Natural killer cell (primary cell): ENCODE measurements at regions of chr7 and their contacts with region 1.

Region 1: DNA sequence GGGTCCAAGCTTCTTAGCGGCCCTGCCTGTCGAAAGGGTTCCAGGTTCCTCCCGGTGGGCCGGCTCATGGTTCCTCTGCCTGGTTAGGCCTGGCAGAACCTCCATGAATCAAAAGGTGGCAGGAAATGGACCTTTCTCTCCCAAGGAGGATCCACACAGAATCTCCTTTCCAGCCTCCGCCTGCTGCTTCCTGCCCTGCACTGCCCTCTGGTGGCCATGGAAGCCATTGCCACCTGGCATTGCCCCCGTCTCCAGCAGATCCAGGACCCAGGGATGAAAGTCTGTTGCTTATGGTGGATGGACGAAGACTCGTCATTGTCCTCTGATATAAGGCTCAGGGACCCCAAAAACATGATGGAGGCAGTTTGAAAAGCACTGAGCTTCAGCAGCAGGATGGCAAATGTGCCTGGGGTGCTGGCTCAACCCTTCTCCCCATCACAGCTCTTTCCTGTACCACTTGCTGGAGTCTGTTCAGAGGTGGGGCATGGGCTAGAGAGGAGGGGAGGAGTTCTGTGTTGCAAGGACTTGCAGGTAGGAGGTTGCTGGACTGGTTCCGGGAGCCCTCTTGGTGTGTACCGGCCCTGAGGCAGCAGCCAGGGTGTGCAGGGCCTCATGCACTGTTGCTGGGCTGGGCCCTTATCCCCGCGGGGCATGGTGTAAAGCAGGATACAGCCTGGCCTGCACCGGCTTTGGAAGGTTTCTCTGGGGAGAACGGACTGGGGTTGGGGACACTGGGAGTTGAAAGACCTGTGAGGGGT is 11.3 kb upstream of the INMT start:
- DNase-seq: peak; percentile 76 to 87
- ATAC-seq: peak; percentile 52 to 77 (median 77)
- H3K4me3 ChIP-seq: no peak overlapping the region
- H3K4me3 Mint-ChIP-seq: no peak overlapping the region
- H3K27ac ChIP-seq: no peak overlapping the region
- H3K27ac Mint-ChIP-seq: no peak overlapping the region
- H3K4me1 ChIP-seq: peaks cover 37% of the 10 kb centered on the region
- H3K4me1 Mint-ChIP-seq: peaks cover 40 to 44% of the 10 kb centered on the region in 2 donors
- H3K27me3 ChIP-seq: no peaks in the 10 kb centered on the region
- H3K27me3 Mint-ChIP-seq: no peaks in the 10 kb centered on the region
- CTCF ChIP-seq: peak; percentile 99

Region 2: DNA sequence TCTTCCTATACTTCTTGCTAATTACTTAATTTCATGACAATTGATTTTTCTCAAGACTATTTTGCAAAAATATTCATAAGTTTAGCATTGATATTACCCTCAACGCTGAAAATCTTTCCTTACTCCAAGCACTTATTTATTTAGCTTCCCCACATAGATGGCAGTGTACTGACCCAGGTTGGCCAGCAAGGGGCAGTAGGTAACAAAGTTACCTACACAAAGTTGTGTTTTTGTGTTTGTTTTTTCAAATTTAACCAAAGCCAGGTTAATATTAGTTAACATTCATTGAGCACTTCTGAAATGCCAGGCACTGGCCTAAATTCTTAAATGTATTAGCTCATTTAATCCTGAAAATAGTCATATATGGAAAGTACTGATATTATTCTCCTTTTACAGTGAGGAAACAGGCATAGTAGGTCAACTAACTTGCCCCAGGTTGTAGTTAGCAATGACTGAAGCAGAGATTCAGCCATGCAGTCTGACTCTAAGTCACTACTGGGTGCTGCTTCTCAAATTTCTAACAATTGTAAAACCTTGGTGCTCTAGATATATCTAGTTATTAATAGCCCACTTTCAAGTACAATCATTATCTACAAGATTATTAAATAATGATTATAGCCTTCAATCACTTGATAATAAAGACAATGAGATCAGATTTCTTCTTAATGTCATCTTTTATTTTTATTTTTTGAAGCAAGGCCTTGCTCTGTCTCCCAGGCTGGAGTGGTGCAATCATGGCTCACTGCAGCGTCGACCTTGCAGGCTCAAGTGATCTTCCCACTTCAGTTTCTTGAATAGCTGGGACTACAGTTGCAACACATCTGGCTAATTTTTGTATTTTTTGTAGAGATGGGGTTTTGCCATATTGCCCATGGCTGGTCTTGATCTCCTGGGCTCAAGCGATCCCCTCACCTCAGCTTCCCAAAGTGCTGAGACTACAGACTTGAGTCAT is 230.2 kb before region 1 on chr7:
- intact Hi-C with region 1: loop called (anchors 1 kb)
- DNase-seq: peak in 1 of 2 donors; percentile 63
- ATAC-seq: peak; percentile 63 to 84 (median 79)
- H3K4me3 ChIP-seq: no peak overlapping the region
- H3K4me3 Mint-ChIP-seq: no peak overlapping the region
- H3K27ac ChIP-seq: no peak overlapping the region
- H3K27ac Mint-ChIP-seq: no peak overlapping the region
- H3K4me1 ChIP-seq: no peaks in the 10 kb centered on the region
- H3K4me1 Mint-ChIP-seq: peaks cover 2 to 3% of the 10 kb centered on the region in 2 donors
- H3K27me3 ChIP-seq: no peaks in the 10 kb centered on the region
- H3K27me3 Mint-ChIP-seq: no peaks in the 10 kb centered on the region
- CTCF ChIP-seq: peak; percentile 88

Region 3: DNA sequence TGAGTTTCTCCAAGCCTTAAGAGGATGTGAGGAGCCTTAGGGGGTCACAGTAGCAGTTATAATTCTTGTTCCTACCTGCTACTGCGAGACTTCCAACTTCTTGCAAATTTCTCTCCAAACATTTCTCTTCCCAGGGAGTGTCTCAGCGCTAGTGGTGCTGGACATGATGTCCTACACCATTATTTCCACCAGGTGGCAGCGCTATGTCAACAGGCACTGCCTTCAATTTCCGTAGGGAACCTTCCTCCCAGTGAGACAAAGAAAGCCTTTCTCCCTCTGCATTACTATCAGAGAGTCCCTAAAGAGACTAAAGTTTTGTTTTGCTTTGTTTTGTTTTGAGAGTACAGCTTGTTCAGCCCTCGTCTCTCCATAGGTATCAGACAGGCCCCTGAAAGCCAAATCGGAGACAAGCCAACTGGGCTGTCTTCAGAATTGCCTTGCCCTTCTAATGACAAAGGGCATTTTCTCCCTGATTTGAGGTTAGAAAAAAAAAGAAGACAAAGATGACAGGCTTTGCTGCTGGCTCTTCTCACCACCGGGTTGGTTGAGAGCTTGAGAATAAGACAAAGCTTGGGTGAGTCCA is 191.8 kb before region 1 on chr7:
- intact Hi-C with region 1: loop called (anchors 1 kb)
- DNase-seq: peak in 1 of 2 donors; percentile 63
- ATAC-seq: peak in 1 of 3 donors; percentile 57
- H3K4me3 ChIP-seq: no peak overlapping the region
- H3K4me3 Mint-ChIP-seq: no peak overlapping the region
- H3K27ac ChIP-seq: no peak overlapping the region
- H3K27ac Mint-ChIP-seq: no peak overlapping the region
- H3K4me1 ChIP-seq: no peaks in the 10 kb centered on the region
- H3K4me1 Mint-ChIP-seq: no peaks in the 10 kb centered on the region
- H3K27me3 ChIP-seq: no peaks in the 10 kb centered on the region
- H3K27me3 Mint-ChIP-seq: no peaks in the 10 kb centered on the region
- CTCF ChIP-seq: peak; percentile 66

Region 4: GRCh38 chr7:30682212-30683083 is 58.2 kb before region 1 on chr7 and contains the start of gene CRHR2:
- intact Hi-C with region 1: loop called (anchors 5 kb)
- DNase-seq: peak; percentile 24 to 59
- ATAC-seq: peak; percentile 56 to 89 (median 86)
- H3K4me3 ChIP-seq: peak within 1 kb of the TSS; percentile 17
- H3K4me3 Mint-ChIP-seq: peak within 1 kb of the TSS; percentile 82
- H3K27ac ChIP-seq: no peak within 1 kb of the TSS
- H3K27ac Mint-ChIP-seq: peak within 1 kb of the TSS in 1 of 2 donors; percentile 61
- H3K4me1 ChIP-seq: peaks cover 15% of the 10 kb centered on the region
- H3K4me1 Mint-ChIP-seq: peaks cover 12 to 15% of the 10 kb centered on the region in 2 donors
- H3K27me3 ChIP-seq: peaks cover 19% of the 10 kb centered on the region
- H3K27me3 Mint-ChIP-seq: peaks cover 48 to 53% of the 10 kb centered on the region in 2 donors
- CTCF ChIP-seq: peak; percentile 30
- total RNA-seq, gene CRHR2: not detected

Region 5: GRCh38 chr7:30702200-30702599 is 38.4 kb before region 1 on chr7:
- intact Hi-C with region 1: loop called (anchors 1 kb)
- DNase-seq: peak in 1 of 2 donors; percentile 68
- ATAC-seq: peak in 2 of 3 donors; percentile 55 to 66
- H3K4me3 ChIP-seq: no peak overlapping the region
- H3K4me3 Mint-ChIP-seq: no peak overlapping the region
- H3K27ac ChIP-seq: no peak overlapping the region
- H3K27ac Mint-ChIP-seq: no peak overlapping the region
- H3K4me1 ChIP-seq: no peaks in the 10 kb centered on the region
- H3K4me1 Mint-ChIP-seq: peaks cover 0 to 11% of the 10 kb centered on the region in 2 donors
- H3K27me3 ChIP-seq: no peaks in the 10 kb centered on the region
- H3K27me3 Mint-ChIP-seq: peaks cover 0 to 3% of the 10 kb centered on the region in 2 donors
- CTCF ChIP-seq: peak; percentile 26

Region 6: GRCh38 chr7:30727061-30727945 is 13.3 kb before region 1 on chr7:
- intact Hi-C with region 1: loop called (anchors 2 kb)
- DNase-seq: peak; percentile 33 to 80
- ATAC-seq: peak; percentile 88 to 90 (median 89)
- H3K4me3 ChIP-seq: peak overlapping the region; percentile 43
- H3K4me3 Mint-ChIP-seq: peak overlapping the region; percentile 84
- H3K27ac ChIP-seq: peak overlapping the region; percentile 70
- H3K27ac Mint-ChIP-seq: peak overlapping the region; percentile 83 to 88
- H3K4me1 ChIP-seq: peaks cover 26% of the 10 kb centered on the region
- H3K4me1 Mint-ChIP-seq: peaks cover 52 to 57% of the 10 kb centered on the region in 2 donors
- H3K27me3 ChIP-seq: no peaks in the 10 kb centered on the region
- H3K27me3 Mint-ChIP-seq: no peaks in the 10 kb centered on the region
- CTCF ChIP-seq: no peak

Region 7: GRCh38 chr7:30845426-30846135 is 105.0 kb after region 1 on chr7:
- intact Hi-C with region 1: no loop called
- DNase-seq: no peak
- ATAC-seq: no peak
- H3K4me3 ChIP-seq: no peak overlapping the region
- H3K4me3 Mint-ChIP-seq: no peak overlapping the region
- H3K27ac ChIP-seq: no peak overlapping the region
- H3K27ac Mint-ChIP-seq: no peak overlapping the region
- H3K4me1 ChIP-seq: no peaks in the 10 kb centered on the region
- H3K4me1 Mint-ChIP-seq: no peaks in the 10 kb centered on the region
- H3K27me3 ChIP-seq: no peaks in the 10 kb centered on the region
- H3K27me3 Mint-ChIP-seq: peaks cover 0 to 4% of the 10 kb centered on the region in 2 donors
- CTCF ChIP-seq: no peak